CD8-positive, alpha-beta T cell (primary cell): ENCODE measurements at regions of chrX and their contacts with region 1.

Region 1: DNA sequence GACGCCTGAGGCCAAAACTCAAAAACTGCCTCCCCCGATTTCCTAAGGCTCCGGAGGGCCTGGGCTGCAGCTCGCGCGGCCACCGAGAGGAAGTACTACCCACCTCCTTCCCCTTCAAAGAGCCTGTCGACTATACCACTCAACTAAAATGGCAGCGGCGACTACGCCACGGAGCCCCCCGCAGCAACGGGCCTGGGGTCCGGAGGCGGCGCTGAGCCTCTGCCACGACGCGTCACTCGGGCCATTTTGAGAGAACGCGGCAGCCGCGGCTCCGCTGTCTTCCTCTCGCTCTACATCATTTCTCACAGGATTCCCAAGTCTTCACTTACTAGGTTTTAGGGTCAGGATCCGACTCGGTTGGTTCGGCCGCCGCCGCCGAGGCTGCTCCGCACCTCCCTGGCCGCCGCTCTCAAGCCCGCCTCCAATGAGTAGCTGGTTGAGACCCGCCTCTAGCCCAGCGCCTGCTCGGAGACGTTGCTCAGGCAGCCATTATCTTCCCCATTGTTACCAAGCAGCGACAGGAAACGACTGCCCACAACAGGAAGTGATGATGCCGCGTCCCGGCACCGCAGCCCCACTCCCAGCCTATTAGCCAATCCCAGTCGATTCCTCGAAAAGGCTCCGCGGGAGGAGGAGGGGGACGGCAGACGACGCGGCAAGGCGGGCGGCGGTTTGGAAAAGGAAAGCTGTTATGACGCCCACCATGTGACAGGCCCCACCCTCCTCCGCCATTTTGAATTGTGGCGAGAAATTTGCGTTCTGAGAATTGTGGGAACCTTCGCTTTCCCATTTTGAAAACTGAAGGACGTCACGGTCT is at the start of gene RLIM:
- DNase-seq: peak; percentile 81 to 97 (median 90)
- ATAC-seq: peak; percentile 83
- H3K4me3 ChIP-seq: peak within 1 kb of the TSS; percentile 67 to 75
- H3K4me3 Mint-ChIP-seq: peak within 1 kb of the TSS; percentile 99
- H3K27ac ChIP-seq: peak within 1 kb of the TSS; percentile 99 to 100
- H3K27ac Mint-ChIP-seq: peak within 1 kb of the TSS; percentile 100
- H3K4me1 ChIP-seq: peaks cover 16% of the 10 kb centered on the region
- H3K4me1 Mint-ChIP-seq: peaks cover 24% of the 10 kb centered on the region
- H3K27me3 ChIP-seq: no peaks in the 10 kb centered on the region
- H3K27me3 Mint-ChIP-seq: no peaks in the 10 kb centered on the region
- CTCF ChIP-seq: no peak
- total RNA-seq, gene RLIM: 71.0 to 76.2 TPM

Region 2: GRCh38 chrX:73977534-73978169 is 636.6 kb before region 1 on chrX:
- CTCF ChIA-PET with region 1: no interaction called
- POLR2A ChIA-PET with region 1: no interaction called
- intact Hi-C with region 1: loop called in 1 of 2 experiments (anchors 10 kb)
- DNase-seq: peak in 4 of 9 experiments; percentile 21 to 81 (median 52)
- ATAC-seq: peak; percentile 84
- H3K4me3 ChIP-seq: no peak overlapping the region
- H3K4me3 Mint-ChIP-seq: peak overlapping the region; percentile 44
- H3K27ac ChIP-seq: peak overlapping the region; percentile 60 to 66
- H3K27ac Mint-ChIP-seq: peak overlapping the region; percentile 91
- H3K4me1 ChIP-seq: peaks cover 25% of the 10 kb centered on the region
- H3K4me1 Mint-ChIP-seq: peaks cover 60% of the 10 kb centered on the region
- H3K27me3 ChIP-seq: no peaks in the 10 kb centered on the region
- H3K27me3 Mint-ChIP-seq: no peaks in the 10 kb centered on the region
- CTCF ChIP-seq: no peak

Region 3: GRCh38 chrX:74603040-74603439 is 11.3 kb before region 1 on chrX:
- CTCF ChIA-PET with region 1: no interaction called
- POLR2A ChIA-PET with region 1: interaction called, 10 read pairs
- intact Hi-C with region 1: no loop called
- DNase-seq: no peak
- ATAC-seq: no peak
- H3K4me3 ChIP-seq: no peak overlapping the region
- H3K4me3 Mint-ChIP-seq: no peak overlapping the region
- H3K27ac ChIP-seq: no peak overlapping the region
- H3K27ac Mint-ChIP-seq: no peak overlapping the region
- H3K4me1 ChIP-seq: peaks cover 26% of the 10 kb centered on the region
- H3K4me1 Mint-ChIP-seq: peaks cover 66% of the 10 kb centered on the region
- H3K27me3 ChIP-seq: no peaks in the 10 kb centered on the region
- H3K27me3 Mint-ChIP-seq: no peaks in the 10 kb centered on the region
- CTCF ChIP-seq: no peak

Region 4: GRCh38 chrX:75273483-75273882 is 659.2 kb after region 1 on chrX:
- CTCF ChIA-PET with region 1: no interaction called
- POLR2A ChIA-PET with region 1: interaction called, 7 read pairs
- intact Hi-C with region 1: loop called (anchors 5 to 10 kb)
- DNase-seq: peak in 1 of 9 experiments; percentile 5
- ATAC-seq: peak; percentile 43
- H3K4me3 ChIP-seq: peak overlapping the region; percentile 75 to 88
- H3K4me3 Mint-ChIP-seq: peak overlapping the region; percentile 92
- H3K27ac ChIP-seq: peak overlapping the region; percentile 89 to 90
- H3K27ac Mint-ChIP-seq: peak overlapping the region; percentile 96
- H3K4me1 ChIP-seq: peaks cover 18% of the 10 kb centered on the region
- H3K4me1 Mint-ChIP-seq: peaks cover 44% of the 10 kb centered on the region
- H3K27me3 ChIP-seq: no peaks in the 10 kb centered on the region
- H3K27me3 Mint-ChIP-seq: no peaks in the 10 kb centered on the region
- CTCF ChIP-seq: no peak

Region 5: GRCh38 chrX:76148753-76149152 is 1534.5 kb after region 1 on chrX:
- CTCF ChIA-PET with region 1: no interaction called
- POLR2A ChIA-PET with region 1: no interaction called
- intact Hi-C with region 1: loop called in 1 of 2 experiments (anchors 10 kb)
- DNase-seq: peak in 8 of 9 experiments; percentile 6 to 76 (median 58)
- ATAC-seq: peak; percentile 35
- H3K4me3 ChIP-seq: peak overlapping the region; percentile 2 to 13
- H3K4me3 Mint-ChIP-seq: peak overlapping the region; percentile 70
- H3K27ac ChIP-seq: peak overlapping the region; percentile 65 to 88
- H3K27ac Mint-ChIP-seq: peak overlapping the region; percentile 95
- H3K4me1 ChIP-seq: peaks cover 24% of the 10 kb centered on the region
- H3K4me1 Mint-ChIP-seq: peaks cover 21% of the 10 kb centered on the region
- H3K27me3 ChIP-seq: no peaks in the 10 kb centered on the region
- H3K27me3 Mint-ChIP-seq: no peaks in the 10 kb centered on the region
- CTCF ChIP-seq: no peak